Activated CD4-positive, alpha-beta memory T cell treated with anti-CD3 and anti-CD28 coated beads, Interleukin-2, amount 10 ng/mL, durations not matched to agents 7 days and 5 days (primary cell): ENCODE measurements at regions of chr18 and their contacts with region 1.

Region 1: DNA sequence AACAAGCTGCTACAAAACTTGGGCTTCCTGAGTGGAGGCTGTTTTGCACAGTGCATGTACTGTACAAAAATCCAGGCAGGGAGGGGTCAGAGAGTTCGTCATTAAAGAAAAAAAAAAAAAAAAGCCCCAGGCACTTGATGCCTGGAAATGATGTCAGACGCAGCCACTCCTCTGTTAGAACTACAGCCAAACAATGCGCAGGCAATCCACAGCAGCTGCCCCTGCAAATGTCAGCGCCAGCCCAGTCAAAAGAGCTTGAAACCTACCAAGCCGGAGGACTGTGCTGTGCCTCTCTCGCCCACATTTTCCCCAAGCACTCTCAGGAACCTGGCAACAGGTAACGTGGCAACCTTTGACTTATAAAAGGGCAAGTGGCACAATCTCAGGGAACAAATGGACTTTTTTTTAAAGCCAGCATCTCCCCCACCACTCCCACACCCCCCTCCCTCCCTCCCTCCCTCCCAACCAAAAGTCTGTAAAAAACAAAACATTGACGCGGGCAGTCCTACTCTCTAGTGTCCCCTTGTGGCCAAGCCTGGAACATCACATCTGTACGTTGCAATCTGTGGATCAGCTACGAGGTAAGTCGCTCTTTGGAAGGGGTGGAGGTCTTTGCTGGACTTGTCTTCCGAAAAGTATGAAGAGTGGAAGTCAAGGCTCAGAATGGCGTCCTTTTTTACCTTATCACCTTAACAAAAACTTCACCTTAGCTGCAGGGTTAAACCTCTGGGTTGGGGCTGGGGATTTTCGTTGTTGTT is 144.1 kb downstream of the TGIF1 start:
- DNase-seq: peak; percentile 91
- H3K4me3 Mint-ChIP-seq: peak overlapping the region; percentile 92
- H3K27ac Mint-ChIP-seq: peak overlapping the region; percentile 98
- H3K4me1 Mint-ChIP-seq: peaks cover 50% of the 10 kb centered on the region
- H3K27me3 Mint-ChIP-seq: no peaks in the 10 kb centered on the region

Region 2: DNA sequence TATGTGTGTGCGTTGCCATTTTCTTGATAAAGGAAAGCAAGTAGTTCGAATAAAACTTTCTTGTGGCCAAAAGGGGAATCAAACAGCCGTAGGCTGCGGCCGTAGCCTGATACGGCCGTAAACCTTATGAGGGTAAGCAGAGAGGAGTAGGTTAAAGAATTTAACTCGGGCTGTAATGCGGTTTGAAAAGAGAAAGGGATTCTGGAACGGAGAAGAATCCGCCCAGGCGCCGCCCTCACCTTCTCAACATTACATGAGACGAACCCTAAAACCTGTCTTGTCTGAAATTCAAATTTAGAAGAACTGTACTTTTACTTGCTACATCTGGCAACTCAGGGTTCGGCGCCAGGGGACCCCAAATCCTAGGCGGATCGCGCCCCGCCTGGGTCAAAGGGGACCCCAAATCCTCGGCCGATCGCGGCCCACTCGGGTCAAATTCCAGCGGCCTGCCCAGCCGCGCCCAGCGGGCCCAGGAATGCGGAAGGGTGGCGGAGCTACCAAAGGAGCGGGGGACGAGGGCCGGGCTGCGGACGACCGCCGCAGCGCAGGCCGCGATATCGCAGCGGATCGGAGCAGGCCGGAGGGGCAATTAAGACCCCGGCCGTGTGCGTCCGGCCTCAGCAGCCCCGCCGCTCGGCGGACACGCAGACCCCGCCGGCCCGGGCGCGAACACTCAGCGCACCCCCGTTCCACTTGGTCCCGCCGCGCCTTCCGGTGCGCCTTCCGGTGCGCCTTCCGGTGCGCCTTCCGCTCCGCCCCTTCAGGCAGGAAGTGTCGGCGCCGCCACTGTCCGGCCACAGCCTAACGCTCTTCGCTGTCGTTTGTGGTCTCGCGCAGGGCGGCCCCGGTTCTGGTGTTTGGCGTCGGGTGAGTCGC is 332.5 kb before region 1 on chr18 and contains the start of gene MYL12B:
- CTCF ChIA-PET with region 1: interaction called, 4 read pairs
- POLR2A ChIA-PET with region 1: interaction called, 22 read pairs
- DNase-seq: peak; percentile 86
- H3K4me3 Mint-ChIP-seq: peak within 1 kb of the TSS; percentile 89
- H3K27ac Mint-ChIP-seq: peak within 1 kb of the TSS; percentile 99
- H3K4me1 Mint-ChIP-seq: peaks cover 71% of the 10 kb centered on the region
- H3K27me3 Mint-ChIP-seq: no peaks in the 10 kb centered on the region
- total RNA-seq, gene MYL12B: 371 to 378 TPM

Region 3: DNA sequence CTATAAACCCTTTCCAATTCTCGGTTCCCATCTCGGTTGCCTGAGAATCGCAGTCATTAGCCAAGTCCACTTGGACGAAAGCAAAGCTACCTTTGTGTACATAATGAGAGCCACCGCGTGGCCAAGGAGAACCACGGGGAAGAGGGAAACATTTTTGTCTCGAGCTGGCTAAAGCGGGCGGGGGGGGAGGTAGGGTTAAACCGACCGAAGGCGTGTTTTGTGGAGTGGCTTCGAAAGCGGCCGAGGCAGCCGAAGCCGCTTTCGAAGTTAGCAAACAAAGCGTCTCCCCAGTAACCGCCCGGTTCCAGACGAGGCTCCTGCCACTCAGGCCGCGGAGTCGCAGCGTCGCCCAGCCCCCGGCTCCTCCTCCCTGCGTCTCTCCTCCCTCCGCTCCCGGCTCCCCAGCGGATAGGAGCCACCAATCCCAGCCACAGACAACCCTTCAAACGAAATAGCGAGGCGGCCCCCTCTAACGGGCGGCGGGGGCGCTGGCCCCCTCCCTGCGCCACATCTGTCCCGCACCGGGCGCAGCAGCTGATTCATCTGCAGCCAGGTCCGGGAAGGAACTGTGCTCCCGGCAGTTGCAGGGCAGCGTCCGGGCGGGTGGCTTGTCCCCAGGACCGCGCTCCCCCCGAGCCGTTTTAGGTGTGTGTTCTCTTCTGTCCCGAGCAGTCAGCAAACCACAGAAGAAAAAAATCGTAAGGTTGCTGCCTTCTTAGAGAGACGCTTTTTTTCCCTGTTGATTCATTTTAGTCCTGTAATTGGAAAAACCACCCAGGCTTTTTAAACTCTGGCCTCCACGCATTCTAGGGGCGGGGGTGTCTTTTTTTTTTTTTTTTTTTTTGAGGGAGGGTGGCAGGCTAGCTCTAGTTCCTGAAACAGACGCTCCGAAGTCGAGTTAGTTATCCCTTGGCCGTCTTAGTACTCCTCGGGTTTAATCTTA is 145.9 kb before region 1 on chr18:
- CTCF ChIA-PET with region 1: interaction called, 75 read pairs
- POLR2A ChIA-PET with region 1: interaction called, 143 read pairs
- DNase-seq: peak; percentile 88
- H3K4me3 Mint-ChIP-seq: peak overlapping the region; percentile 92
- H3K27ac Mint-ChIP-seq: peak overlapping the region; percentile 99
- H3K4me1 Mint-ChIP-seq: peaks cover 31% of the 10 kb centered on the region
- H3K27me3 Mint-ChIP-seq: no peaks in the 10 kb centered on the region

Region 4: DNA sequence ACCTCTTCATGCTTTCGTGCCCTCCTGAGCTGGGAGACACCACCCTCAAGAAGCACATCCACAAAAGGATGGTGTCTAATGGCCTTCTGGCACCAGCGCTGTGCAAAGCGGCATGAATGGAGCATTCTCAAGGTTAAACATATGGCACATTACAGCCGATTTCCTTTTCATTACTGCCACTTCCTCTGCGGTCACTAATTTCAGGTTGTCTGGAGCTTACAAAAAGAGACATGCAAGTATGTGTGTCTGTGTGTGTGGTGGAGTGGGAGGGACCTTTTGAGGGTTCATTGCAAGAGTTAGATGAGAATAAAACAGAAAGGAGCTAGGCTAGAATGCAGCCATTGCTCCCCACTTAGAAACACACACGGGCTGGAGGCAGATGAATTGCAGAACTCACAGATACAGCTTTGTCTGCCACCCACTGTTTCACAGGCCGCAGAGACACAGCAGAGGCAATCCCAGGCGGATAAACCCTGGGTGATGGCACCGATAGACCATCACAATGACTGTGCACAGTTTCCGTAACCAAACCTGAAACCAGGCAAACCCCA is 68.1 kb before region 1 on chr18:
- CTCF ChIA-PET with region 1: interaction called, 3 read pairs
- POLR2A ChIA-PET with region 1: interaction called, 10 read pairs
- DNase-seq: peak; percentile 60
- H3K4me3 Mint-ChIP-seq: peak overlapping the region; percentile 33
- H3K27ac Mint-ChIP-seq: peak overlapping the region; percentile 27
- H3K4me1 Mint-ChIP-seq: peaks cover 17% of the 10 kb centered on the region
- H3K27me3 Mint-ChIP-seq: peaks cover 7% of the 10 kb centered on the region

Region 5: DNA sequence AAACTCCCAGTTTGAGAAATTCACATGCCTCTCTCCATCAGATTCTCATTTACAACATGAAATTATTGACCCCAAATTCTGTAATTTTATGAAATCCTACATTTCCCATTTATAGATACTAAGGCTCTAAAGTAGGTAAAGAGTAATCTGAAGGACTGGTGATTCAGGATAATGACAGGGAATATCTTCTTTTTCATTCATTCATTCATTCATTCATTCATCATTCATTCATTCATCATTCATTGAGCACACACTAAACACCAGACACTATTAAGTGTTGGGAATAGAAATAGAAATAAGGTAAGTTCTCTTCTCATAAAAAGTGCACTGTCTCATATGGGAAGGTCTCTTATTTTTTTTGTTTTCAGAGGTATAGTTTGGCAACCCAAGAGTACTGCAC is 27.2 kb before region 1 on chr18:
- CTCF ChIA-PET with region 1: no interaction called
- POLR2A ChIA-PET with region 1: no interaction called
- DNase-seq: no peak
- H3K4me3 Mint-ChIP-seq: no peak overlapping the region
- H3K27ac Mint-ChIP-seq: no peak overlapping the region
- H3K4me1 Mint-ChIP-seq: no peaks in the 10 kb centered on the region
- H3K27me3 Mint-ChIP-seq: no peaks in the 10 kb centered on the region

Region 6: GRCh38 chr18:3604498-3605408 is 10.7 kb after region 1 on chr18:
- CTCF ChIA-PET with region 1: interaction called, 51 read pairs
- POLR2A ChIA-PET with region 1: interaction called, 239 read pairs
- DNase-seq: peak; percentile 50
- H3K4me3 Mint-ChIP-seq: no peak overlapping the region
- H3K27ac Mint-ChIP-seq: no peak overlapping the region
- H3K4me1 Mint-ChIP-seq: peaks cover 18% of the 10 kb centered on the region
- H3K27me3 Mint-ChIP-seq: no peaks in the 10 kb centered on the region

Region 7: DNA sequence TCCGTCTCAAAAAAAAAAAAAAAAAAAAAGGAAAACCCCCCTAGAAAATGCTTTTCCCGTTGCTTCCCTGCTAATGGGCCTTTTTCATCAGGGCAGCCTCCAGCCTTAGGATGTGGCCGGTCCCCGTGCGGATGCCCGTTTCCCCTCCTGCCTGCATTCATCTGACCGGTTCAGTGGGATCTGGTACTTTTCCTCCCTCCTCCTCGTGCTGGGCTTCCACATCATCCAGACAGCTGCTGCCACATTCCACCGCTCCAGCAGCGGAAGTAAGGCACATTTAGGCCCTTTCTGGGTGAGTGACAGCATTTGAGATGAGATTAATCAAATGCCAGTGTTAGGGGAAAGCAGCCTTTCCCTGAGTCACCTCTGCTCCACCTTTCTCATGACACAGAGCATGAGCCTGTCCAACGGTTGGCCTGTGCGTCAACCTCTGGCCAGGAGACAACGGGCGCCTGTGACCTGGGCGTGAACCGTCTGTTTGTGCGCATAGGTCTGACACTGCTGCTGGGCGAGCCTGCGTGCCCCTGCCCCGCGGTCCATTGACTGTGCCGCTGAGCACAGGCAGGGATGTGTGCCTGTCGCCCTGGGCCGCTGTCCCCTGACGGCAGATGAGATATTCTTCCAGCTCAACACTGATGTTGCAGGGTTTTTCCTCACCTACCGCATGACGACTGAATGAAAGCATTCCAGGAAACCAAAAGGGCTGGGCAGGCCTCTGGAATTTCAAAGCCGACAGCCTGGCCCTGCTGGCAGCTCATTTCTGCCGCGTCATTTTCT is 29.9 kb after region 1 on chr18:
- CTCF ChIA-PET with region 1: interaction called, 3 read pairs
- POLR2A ChIA-PET with region 1: interaction called, 12 read pairs
- DNase-seq: peak; percentile 31
- H3K4me3 Mint-ChIP-seq: peak overlapping the region; percentile 28
- H3K27ac Mint-ChIP-seq: peak overlapping the region; percentile 73
- H3K4me1 Mint-ChIP-seq: peaks cover 36% of the 10 kb centered on the region
- H3K27me3 Mint-ChIP-seq: no peaks in the 10 kb centered on the region